CD8-positive, alpha-beta memory T cell (primary cell): ENCODE measurements at regions of chr9 and their contacts with region 1.

Region 1: DNA sequence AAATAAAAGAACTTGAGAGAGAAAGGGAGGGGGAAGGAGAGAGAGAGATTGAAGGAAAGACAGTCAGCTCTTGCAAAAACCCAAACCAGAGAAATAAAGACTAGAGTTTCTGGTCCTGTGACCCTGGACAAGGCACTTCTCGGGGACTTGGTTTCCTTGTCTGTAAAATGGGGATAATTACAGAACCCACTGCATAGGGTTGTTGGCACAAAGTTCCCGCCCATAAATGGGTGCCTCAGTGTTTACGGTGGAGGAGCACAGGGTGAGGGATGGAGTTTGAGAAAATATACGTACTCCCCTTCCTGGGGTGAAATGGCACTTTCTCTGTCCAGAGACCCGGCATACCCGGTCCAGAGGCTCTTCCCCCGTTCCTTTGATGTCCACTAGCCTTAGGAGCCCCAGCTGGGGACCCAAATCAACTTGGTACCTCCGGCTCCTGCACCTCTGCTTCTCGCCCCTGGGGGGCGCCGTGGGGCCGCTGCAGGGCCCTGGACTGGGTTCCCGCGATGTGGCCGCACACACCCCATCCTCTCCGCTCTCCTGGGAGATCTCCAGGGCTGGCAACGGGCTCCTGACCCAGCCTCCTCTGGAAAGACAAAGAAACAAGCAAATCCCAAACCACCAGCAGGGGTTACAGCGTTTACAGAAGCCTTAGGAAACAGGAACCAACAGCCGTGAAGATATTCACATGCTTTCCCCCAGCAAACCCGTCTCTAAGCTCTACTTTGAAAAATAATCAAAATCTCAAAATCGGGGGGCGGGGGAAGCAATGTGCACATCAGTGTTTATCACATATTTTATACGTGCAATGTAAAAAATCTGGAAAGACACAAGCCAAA is 26.3 kb downstream of the PTGES start:
- DNase-seq: peak; percentile 30 to 61 (median 38)
- H3K4me3 ChIP-seq: no peak overlapping the region
- H3K4me3 Mint-ChIP-seq: peak overlapping the region in 2 of 7 donors; percentile 46 to 53
- H3K27ac ChIP-seq: no peak overlapping the region
- H3K27ac Mint-ChIP-seq: no peak overlapping the region
- H3K4me1 ChIP-seq: no peaks in the 10 kb centered on the region
- H3K4me1 Mint-ChIP-seq: peaks cover 2 to 3% (median 3%) of the 10 kb centered on the region in 3 donors
- H3K27me3 ChIP-seq: no peaks in the 10 kb centered on the region
- H3K27me3 Mint-ChIP-seq: peaks cover 8 to 13% of the 10 kb centered on the region in 2 donors

Region 2: DNA sequence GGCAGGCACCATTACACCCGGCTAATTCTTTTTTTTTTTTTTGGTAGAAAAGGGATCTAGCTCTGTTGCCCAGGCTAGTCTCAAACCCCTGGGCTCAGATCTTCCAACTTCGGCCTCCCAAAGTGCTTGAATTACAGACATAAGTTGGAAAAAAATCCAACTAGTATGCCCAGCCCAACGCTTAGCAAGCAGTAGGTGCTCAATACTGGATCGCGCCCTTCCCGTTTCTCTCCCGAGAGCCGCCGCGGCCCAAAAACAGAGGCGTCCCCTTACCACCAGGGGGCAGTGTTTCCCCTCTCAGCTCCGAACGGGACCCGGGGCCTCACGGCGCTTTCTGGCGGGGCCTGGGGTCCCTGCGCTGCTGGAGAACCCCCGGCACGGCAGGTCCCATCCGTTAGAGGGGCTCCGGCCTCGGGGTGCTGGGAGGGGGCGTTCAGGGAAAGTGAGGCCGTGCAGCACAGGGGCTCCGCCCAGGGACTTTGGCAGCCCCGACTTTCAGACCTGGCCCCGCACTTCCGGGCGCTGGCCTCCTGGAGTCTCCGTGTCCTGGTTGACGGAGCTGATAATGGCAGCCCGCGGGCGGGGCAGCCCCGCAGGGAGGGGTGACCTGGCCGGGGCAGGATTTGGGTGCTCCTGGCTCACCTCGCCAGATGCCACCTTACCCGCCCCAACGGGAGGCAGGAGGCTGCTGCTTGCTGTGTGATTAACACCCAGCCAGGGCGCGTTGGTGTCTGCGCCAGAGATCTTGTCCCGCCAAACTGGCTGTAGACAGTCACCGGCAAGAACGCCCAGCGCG is 11.1 kb after region 1 on chr9:
- CTCF ChIA-PET with region 1: interaction called, 42 read pairs
- POLR2A ChIA-PET with region 1: no interaction called
- DNase-seq: peak; percentile 77 to 87 (median 84)
- H3K4me3 ChIP-seq: peak overlapping the region; percentile 81
- H3K4me3 Mint-ChIP-seq: peak overlapping the region; percentile 71 to 90 (median 76)
- H3K27ac ChIP-seq: peak overlapping the region; percentile 82
- H3K27ac Mint-ChIP-seq: peak overlapping the region; percentile 42 to 93 (median 74)
- H3K4me1 ChIP-seq: peaks cover 13% of the 10 kb centered on the region
- H3K4me1 Mint-ChIP-seq: peaks cover 6 to 13% (median 9%) of the 10 kb centered on the region in 3 donors
- H3K27me3 ChIP-seq: no peaks in the 10 kb centered on the region
- H3K27me3 Mint-ChIP-seq: peaks cover 0 to 7% of the 10 kb centered on the region in 2 donors

Region 3: DNA sequence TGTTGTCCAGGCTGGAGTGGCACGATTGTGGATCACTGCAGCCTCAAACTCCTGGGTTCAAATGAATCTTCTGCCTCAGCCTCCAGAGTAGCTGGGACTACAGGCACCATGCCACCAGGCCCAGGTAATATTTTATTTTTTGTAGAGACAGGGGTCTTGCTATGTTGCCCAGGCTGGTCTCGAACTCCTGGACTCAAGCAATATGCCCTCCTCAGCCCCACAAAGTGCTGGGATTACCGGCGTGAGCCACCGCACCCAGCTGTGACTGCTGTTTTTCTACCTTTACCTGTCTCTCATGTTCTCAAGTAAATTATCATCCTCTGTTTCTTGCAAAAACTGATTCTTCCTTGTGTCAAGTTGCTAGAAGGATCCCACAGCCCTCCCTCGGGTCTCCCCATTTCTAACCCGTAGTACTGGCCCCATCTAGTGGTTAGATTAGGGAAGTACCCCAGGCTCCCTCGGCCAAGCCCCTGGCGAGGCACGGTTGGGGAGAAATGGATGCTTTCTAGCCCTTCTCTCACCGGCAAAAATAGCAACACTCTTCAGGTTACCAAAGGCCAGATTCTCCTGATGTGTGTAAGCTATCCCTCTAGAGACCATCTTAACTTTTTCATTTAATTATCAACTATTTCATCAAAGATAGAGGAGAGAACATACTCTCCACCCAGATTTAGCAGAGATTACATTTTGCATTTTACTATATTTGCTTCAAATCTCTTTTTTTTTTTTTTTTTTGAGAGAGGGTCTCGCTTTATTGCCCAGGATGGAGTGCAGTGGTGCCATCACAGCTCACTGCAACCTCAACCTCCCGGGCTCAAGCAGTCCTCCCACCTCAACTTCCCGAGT is 57.2 kb after region 1 on chr9:
- CTCF ChIA-PET with region 1: interaction called, 29 read pairs
- POLR2A ChIA-PET with region 1: interaction called, 5 read pairs
- DNase-seq: peak; percentile 40 to 79 (median 63)
- H3K4me3 ChIP-seq: no peak overlapping the region
- H3K4me3 Mint-ChIP-seq: no peak overlapping the region
- H3K27ac ChIP-seq: no peak overlapping the region
- H3K27ac Mint-ChIP-seq: peak overlapping the region in 1 of 8 donors; percentile 1
- H3K4me1 ChIP-seq: no peaks in the 10 kb centered on the region
- H3K4me1 Mint-ChIP-seq: peaks cover 0 to 5% (median 3%) of the 10 kb centered on the region in 3 donors
- H3K27me3 ChIP-seq: no peaks in the 10 kb centered on the region
- H3K27me3 Mint-ChIP-seq: peaks cover 11 to 14% of the 10 kb centered on the region in 2 donors